ENCODE measurements at regions of chr20 and their contacts with region 1.

Region 1: DNA sequence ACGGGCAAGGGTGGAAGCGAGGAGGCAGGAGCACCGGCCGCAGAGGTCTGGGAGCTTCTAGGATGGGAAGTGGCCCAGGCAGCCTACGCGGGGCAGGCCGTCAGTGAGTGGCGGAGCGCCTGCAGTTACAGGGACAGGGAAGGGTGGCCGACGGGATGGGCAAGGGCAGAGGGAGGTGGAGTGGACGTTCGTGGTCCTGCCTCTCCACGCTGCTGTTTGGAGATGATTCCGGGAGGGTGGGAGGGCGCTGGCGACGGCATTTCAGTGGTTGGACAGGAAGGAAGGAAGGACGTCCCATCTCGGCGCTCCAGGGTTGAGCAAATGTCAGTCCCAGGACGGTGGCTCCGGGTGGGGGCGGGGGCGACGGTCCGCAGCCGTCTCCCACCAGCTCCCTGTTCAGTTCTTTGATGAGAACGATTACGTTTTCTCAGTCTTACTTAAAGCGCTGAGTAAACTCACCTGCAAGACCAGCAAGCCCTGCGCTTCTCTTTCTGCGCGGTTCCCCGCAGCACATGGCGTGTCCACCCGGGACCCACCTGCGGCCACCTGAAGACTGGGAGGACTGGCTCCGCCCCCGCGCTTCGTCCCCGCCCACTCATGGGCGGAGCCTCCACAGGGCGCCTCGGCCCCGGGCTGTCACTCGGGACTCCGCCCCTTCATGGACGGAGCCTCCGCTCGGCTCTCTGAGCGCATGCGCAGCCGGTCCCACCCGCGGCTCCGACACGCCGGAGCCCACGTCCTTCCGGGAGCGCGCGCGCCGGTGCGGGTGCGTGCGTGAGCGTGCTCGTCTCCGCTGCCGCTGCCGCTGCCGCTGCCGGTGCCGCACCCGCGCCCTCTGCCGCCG is at the start of gene DNAJC5:
- DNase-seq: peak; percentile 99 to 100
- H3K4me3 ChIP-seq: peak within 1 kb of the TSS; percentile 61
- H3K4me3 Mint-ChIP-seq: peak within 1 kb of the TSS; percentile 76
- H3K27ac Mint-ChIP-seq: peak within 1 kb of the TSS; percentile 85
- H3K4me1 ChIP-seq: peaks cover 27% of the 10 kb centered on the region
- H3K4me1 Mint-ChIP-seq: peaks cover 27% of the 10 kb centered on the region
- H3K27me3 ChIP-seq: no peaks in the 10 kb centered on the region
- H3K27me3 Mint-ChIP-seq: no peaks in the 10 kb centered on the region
- CTCF ChIP-seq: no peak
- total RNA-seq, gene DNAJC5: 117 and 124 TPM in 2 replicates

Region 2: DNA sequence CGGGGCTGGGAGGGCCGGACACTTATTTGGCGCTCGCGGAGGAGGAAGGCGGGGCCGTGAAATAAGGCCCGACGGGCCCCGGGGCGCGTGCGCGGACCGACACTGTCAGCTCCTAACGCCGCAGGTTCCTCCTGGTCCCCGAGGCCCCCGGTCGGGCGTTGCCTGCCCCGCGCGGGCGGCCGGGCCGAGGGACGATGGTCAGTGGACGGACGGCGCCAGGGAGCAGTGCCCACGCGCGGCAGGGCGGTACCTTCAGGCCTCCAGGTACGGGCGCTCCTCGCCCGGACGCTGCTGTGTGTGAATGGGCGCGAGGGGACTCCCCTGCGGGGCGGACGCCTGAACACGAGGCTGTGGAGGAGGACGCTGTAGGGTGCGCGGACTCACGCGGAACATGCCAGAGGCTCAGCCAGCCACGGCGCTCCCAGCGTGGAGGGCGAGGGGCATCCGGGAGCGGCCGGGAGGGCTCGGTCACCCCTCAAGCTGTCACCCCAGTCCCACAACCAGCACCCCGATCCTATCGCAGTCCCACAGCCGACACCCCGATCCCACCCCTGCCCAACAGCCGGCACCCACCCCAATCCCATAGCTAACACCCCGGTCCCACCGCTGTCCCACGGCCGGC is 267.3 kb before region 1 on chr20:
- CTCF ChIA-PET with region 1: interaction called, 3 read pairs
- POLR2A ChIA-PET with region 1: no interaction called
- intact Hi-C with region 1: loop called (anchors 10 kb)
- DNase-seq: peak; percentile 98 to 100
- H3K4me3 ChIP-seq: peak overlapping the region; percentile 91
- H3K4me3 Mint-ChIP-seq: peak overlapping the region; percentile 80
- H3K27ac Mint-ChIP-seq: peak overlapping the region; percentile 80
- H3K4me1 ChIP-seq: peaks cover 18% of the 10 kb centered on the region
- H3K4me1 Mint-ChIP-seq: peaks cover 25% of the 10 kb centered on the region
- H3K27me3 ChIP-seq: no peaks in the 10 kb centered on the region
- H3K27me3 Mint-ChIP-seq: no peaks in the 10 kb centered on the region
- CTCF ChIP-seq: no peak

Region 3: DNA sequence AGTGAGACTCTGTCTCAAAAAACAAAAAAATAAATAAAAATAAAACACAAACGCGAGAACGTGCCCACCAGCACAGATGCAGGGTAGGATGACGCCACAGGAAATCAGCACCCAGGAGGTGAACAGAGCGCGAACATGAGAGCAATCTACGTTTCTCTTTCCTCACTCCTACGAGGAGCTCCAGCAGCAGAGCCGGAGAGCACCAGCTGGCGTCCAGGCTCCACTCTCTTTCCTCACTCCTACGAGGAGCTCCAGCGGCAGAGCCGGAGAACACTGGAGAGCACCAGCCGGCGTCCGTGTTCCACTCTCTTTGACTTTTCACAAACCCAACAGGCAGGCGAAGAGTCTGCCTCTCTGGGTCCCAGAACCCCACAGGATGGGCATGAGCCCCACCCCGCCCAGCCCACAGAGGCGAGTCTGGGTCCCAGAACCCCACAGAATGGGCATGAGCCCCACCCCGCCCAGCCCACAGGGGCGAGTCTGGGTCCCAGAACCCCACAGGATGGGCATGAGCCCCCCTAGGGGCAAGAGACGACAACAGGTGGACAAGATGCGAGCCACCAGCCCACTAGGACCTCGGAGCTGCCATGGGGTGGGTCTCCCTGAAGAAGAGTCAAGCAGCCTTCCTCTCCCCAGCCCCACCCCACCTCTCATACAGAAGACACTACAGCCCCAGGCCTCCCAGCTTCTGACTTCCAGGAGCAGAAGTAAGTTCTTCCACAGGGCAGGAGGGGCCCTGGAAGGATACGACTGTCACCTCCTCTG is 83.7 kb before region 1 on chr20:
- CTCF ChIA-PET with region 1: no interaction called
- POLR2A ChIA-PET with region 1: no interaction called
- intact Hi-C with region 1: no loop called
- DNase-seq: no peak
- H3K4me3 ChIP-seq: no peak overlapping the region
- H3K4me3 Mint-ChIP-seq: no peak overlapping the region
- H3K27ac Mint-ChIP-seq: no peak overlapping the region
- H3K4me1 ChIP-seq: no peaks in the 10 kb centered on the region
- H3K4me1 Mint-ChIP-seq: no peaks in the 10 kb centered on the region
- H3K27me3 ChIP-seq: no peaks in the 10 kb centered on the region
- H3K27me3 Mint-ChIP-seq: no peaks in the 10 kb centered on the region
- CTCF ChIP-seq: no peak

Region 4: DNA sequence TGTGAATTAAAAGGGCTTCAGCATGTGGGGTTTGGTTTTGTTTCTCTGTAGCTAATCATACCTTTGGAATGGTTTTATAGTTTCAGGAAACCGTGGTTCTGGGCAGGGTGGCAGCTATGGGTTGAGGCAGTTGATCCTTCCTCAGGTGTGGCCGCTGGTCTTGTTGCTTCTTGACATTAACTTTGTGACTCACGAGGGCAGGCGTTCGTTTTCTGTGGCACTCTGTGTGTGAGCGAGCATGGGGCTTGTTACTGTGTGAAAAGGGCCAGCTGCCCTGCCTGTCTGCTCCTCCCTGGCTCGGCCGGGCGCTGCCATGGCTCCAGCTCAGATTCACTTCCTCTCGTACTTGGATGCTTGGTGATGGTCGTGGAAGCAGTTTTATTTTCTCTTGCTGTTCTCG is 16.6 kb after region 1 on chr20:
- CTCF ChIA-PET with region 1: no interaction called
- POLR2A ChIA-PET with region 1: interaction called, 3 read pairs
- intact Hi-C with region 1: loop called (anchors 1 kb)
- DNase-seq: no peak
- H3K4me3 ChIP-seq: no peak overlapping the region
- H3K4me3 Mint-ChIP-seq: no peak overlapping the region
- H3K27ac Mint-ChIP-seq: no peak overlapping the region
- H3K4me1 ChIP-seq: peaks cover 30% of the 10 kb centered on the region
- H3K4me1 Mint-ChIP-seq: peaks cover 37% of the 10 kb centered on the region
- H3K27me3 ChIP-seq: no peaks in the 10 kb centered on the region
- H3K27me3 Mint-ChIP-seq: no peaks in the 10 kb centered on the region
- CTCF ChIP-seq: no peak

Region 5: GRCh38 chr20:64062596-64063388 is 168.2 kb after region 1 on chr20 and contains the start of gene TCEA2:
- CTCF ChIA-PET with region 1: no interaction called
- POLR2A ChIA-PET with region 1: no interaction called
- intact Hi-C with region 1: loop called (anchors 10 kb)
- DNase-seq: peak; percentile 99 to 100
- H3K4me3 ChIP-seq: peak within 1 kb of the TSS; percentile 74
- H3K4me3 Mint-ChIP-seq: peak within 1 kb of the TSS; percentile 81
- H3K27ac Mint-ChIP-seq: peak within 1 kb of the TSS; percentile 16
- H3K4me1 ChIP-seq: peaks cover 23% of the 10 kb centered on the region
- H3K4me1 Mint-ChIP-seq: peaks cover 28% of the 10 kb centered on the region
- H3K27me3 ChIP-seq: no peaks in the 10 kb centered on the region
- H3K27me3 Mint-ChIP-seq: no peaks in the 10 kb centered on the region
- CTCF ChIP-seq: no peak
- total RNA-seq, gene TCEA2: 39.9 and 48.3 TPM in 2 replicates

Measured in Caco-2 (cell line).